ENCODE measurements at regions of chr4 and their contacts with region 1.

Region 1: GRCh38 chr4:39697740-39698423 is at the start of gene UBE2K:
- DNase-seq: peak; percentile 96
- ATAC-seq: peak; percentile 88
- H3K4me3 Mint-ChIP-seq: peak within 1 kb of the TSS; percentile 95
- H3K27ac Mint-ChIP-seq: peak within 1 kb of the TSS; percentile 98
- H3K4me1 Mint-ChIP-seq: peaks cover 22% of the 10 kb centered on the region
- H3K27me3 Mint-ChIP-seq: no peaks in the 10 kb centered on the region
- total RNA-seq, gene UBE2K: 67.4 to 73.1 TPM

Region 2: DNA sequence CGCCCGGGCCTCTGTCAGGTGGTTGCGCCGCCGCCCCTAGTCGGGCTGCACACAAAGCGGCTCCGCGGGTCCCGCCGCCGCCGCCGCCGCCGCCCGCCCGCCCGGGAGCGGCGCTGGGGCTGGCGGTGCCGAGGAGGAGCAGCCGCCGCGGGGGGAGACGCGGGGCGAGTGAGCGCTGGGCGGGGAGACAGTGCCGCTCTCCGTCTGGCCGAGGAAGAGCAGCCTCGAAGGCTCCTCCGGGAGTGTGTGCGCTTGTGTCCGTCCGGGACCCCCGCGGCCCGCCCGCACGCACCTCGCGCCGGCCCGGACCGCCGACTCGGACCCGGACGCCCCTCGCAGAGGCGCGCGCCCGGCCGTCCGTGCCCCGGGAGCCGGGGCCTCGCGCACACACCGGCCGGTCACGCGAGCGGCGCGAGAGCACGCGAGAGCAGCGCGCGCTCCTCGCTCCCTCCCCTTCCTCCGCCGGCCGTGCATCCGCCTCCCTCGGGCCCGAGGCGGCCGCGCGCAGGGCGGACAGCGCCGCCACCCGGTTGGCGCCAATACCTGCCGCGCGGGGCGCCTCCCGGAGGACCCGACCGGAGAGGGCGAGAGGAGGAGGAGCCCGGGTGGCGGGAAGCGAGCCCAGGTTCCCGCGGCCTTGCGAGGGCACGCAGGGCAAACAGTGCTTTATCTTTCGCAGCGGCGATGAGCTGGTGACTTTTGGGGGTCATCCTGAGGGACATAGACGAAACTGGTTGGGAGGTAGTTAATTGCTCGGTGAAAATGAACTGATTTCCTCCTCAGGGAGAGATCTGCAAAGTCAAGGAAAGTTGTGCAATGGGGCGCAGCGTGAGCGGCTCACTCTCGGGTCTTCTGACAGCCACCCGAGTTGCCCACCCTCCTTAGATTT is 279.9 kb after region 1 on chr4 and contains the start of gene PDS5A:
- POLR2A ChIA-PET with region 1: interaction called, 14 read pairs
- DNase-seq: peak; percentile 97
- ATAC-seq: peak; percentile 87
- H3K4me3 Mint-ChIP-seq: peak within 1 kb of the TSS; percentile 99
- H3K27ac Mint-ChIP-seq: peak within 1 kb of the TSS; percentile 97
- H3K4me1 Mint-ChIP-seq: peaks cover 29% of the 10 kb centered on the region
- H3K27me3 Mint-ChIP-seq: no peaks in the 10 kb centered on the region
- total RNA-seq, gene PDS5A: 96.7 to 99.9 TPM

Measured in activated naive CD8-positive, alpha-beta T cell treated with anti-CD3 and anti-CD28 coated beads, Interleukin-2, amount 10 ng/mL, durations not matched to agents 7 days and 5 days (primary cell).